Posterior cingulate gyrus (tissue), 11 donors: ENCODE measurements at regions of chr12 and their contacts with region 1.

Region 1: DNA sequence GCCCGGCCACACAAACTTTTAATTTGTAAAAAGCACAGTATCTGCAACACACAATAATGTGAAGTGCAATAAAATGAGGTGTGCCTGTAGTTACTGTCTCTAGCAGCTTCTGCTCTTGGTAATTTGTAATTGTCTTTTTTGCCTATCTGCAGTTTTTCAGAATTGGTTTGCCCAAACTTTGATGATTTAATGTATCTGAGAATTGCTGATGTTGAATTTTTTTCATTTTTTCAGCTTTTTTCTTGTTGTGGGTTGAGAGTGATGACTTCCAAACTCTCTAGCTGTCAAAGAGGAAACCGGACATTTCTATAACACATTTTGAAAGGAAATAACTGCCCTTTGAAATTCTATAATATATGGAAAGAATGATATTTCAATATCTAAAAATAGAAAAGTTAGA is 236.9 kb downstream of the RERGL start:
- DNase-seq: no peak

Region 2: DNA sequence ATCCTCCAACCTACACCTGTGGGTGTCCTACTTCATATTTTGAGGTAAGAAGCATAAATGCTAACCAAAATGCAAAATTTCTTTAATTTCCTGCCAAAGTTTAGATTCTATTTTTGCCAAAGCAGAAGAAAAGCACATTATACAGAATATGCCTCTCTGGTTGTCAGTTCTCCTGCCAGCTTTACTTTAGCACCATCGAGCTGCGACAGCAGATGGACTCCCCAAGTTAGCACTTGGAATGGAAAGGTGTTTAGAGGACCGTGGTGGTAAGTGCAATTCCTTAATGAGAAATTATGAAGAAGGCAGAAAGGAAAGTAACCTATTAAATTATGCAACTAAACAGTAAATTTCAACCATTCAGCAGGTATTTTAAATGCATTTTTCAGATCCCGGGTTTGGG is 89.7 kb before region 1 on chr12:
- intact Hi-C with region 1: loop called (anchors 2 kb)
- DNase-seq: peak in 7 of 10 donors; percentile 11 to 79 (median 28)